ENCODE measurements at regions of chr15 and their contacts with region 1.

Region 1: GRCh38 chr15:39756806-39757522 is 25.7 kb downstream of the FSIP1 start:
- DNase-seq: peak in 5 of 14 experiments; percentile 3 to 75 (median 65)
- ATAC-seq: no peak
- H3K4me3 ChIP-seq: no peak overlapping the region
- H3K4me3 Mint-ChIP-seq: no peak overlapping the region
- H3K27ac ChIP-seq: no peak overlapping the region
- H3K27ac Mint-ChIP-seq: no peak overlapping the region
- H3K4me1 ChIP-seq: no peaks in the 10 kb centered on the region
- H3K4me1 Mint-ChIP-seq: no peaks in the 10 kb centered on the region
- H3K27me3 ChIP-seq: no peaks in the 10 kb centered on the region
- H3K27me3 Mint-ChIP-seq: peaks cover 7% of the 10 kb centered on the region
- CTCF ChIP-seq: peak; percentile 97

Region 2: DNA sequence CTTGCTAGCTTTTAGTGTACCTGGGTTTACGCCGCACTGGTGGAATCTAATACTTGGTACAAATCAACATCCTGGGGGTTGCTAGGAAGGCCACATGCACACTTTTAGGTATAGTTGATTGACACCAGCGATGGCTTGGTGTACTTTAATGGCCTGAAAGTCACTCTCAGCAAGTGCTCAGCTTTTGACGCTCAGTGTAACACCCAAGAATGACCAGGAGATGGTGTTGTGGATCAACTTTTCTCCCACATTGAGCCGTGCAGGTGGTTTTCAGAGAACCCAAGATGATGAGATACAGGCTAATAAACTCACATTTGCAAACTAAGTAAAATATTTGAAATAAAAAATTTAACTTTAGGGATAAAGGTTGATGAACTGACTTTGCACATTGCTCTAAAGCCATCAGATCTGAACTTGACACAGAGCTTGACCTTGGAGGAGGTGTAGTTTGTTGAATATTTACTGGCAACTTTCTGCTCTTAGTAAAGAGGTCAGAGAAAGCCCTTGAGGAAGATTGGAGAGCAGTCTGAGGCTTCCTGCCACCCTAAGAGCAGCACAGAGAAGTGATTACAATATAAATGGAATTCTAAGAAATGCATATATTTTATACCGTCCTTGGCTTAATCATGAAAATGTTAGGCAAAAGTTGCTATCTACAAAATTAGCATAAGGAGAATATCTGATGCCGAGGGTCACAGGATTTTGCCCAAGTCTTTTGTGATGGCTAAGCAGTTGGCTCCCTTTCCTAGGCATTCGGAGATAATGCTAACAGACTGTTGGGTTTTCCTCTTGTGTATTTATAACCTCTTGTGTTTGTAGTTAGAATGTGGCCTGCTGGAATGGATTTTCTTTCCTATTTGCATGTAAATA is 1048.9 kb before region 1 on chr15:
- CTCF ChIA-PET with region 1: interaction called, 9 read pairs
- POLR2A ChIA-PET with region 1: interaction called, 3 read pairs
- intact Hi-C with region 1: loop called (anchors 2 to 5 kb)
- DNase-seq: peak in 6 of 14 experiments; percentile 9 to 76 (median 54)
- ATAC-seq: peak; percentile 98
- H3K4me3 ChIP-seq: no peak overlapping the region
- H3K4me3 Mint-ChIP-seq: no peak overlapping the region
- H3K27ac ChIP-seq: no peak overlapping the region
- H3K27ac Mint-ChIP-seq: no peak overlapping the region
- H3K4me1 ChIP-seq: no peaks in the 10 kb centered on the region
- H3K4me1 Mint-ChIP-seq: no peaks in the 10 kb centered on the region
- H3K27me3 ChIP-seq: no peaks in the 10 kb centered on the region
- H3K27me3 Mint-ChIP-seq: no peaks in the 10 kb centered on the region
- CTCF ChIP-seq: peak; percentile 71

Region 3: GRCh38 chr15:39125904-39126303 is 631.1 kb before region 1 on chr15:
- CTCF ChIA-PET with region 1: no interaction called
- POLR2A ChIA-PET with region 1: no interaction called
- intact Hi-C with region 1: loop called (anchors 2 to 5 kb)
- DNase-seq: peak in 6 of 14 experiments; percentile 1 to 51 (median 22)
- ATAC-seq: no peak
- H3K4me3 ChIP-seq: no peak overlapping the region
- H3K4me3 Mint-ChIP-seq: no peak overlapping the region
- H3K27ac ChIP-seq: no peak overlapping the region
- H3K27ac Mint-ChIP-seq: no peak overlapping the region
- H3K4me1 ChIP-seq: no peaks in the 10 kb centered on the region
- H3K4me1 Mint-ChIP-seq: no peaks in the 10 kb centered on the region
- H3K27me3 ChIP-seq: no peaks in the 10 kb centered on the region
- H3K27me3 Mint-ChIP-seq: peaks cover 13% of the 10 kb centered on the region
- CTCF ChIP-seq: peak; percentile 35

Region 4: GRCh38 chr15:39594056-39594763 is 162.8 kb before region 1 on chr15:
- CTCF ChIA-PET with region 1: interaction called, 18 read pairs
- POLR2A ChIA-PET with region 1: no interaction called
- intact Hi-C with region 1: loop called in 1 of 2 experiments (anchors 5 kb)
- DNase-seq: peak in 6 of 14 experiments; percentile 10 to 72 (median 56)
- ATAC-seq: no peak
- H3K4me3 ChIP-seq: no peak overlapping the region
- H3K4me3 Mint-ChIP-seq: no peak overlapping the region
- H3K27ac ChIP-seq: no peak overlapping the region
- H3K27ac Mint-ChIP-seq: no peak overlapping the region
- H3K4me1 ChIP-seq: no peaks in the 10 kb centered on the region
- H3K4me1 Mint-ChIP-seq: no peaks in the 10 kb centered on the region
- H3K27me3 ChIP-seq: no peaks in the 10 kb centered on the region
- H3K27me3 Mint-ChIP-seq: peaks cover 4% of the 10 kb centered on the region
- CTCF ChIP-seq: peak; percentile 38

Region 5: GRCh38 chr15:39770748-39771689 is 14.1 kb after region 1 on chr15:
- CTCF ChIA-PET with region 1: interaction called, 8 read pairs
- POLR2A ChIA-PET with region 1: interaction called, 10 read pairs
- intact Hi-C with region 1: no loop called
- DNase-seq: no peak
- ATAC-seq: no peak
- H3K4me3 ChIP-seq: no peak overlapping the region
- H3K4me3 Mint-ChIP-seq: no peak overlapping the region
- H3K27ac ChIP-seq: no peak overlapping the region
- H3K27ac Mint-ChIP-seq: no peak overlapping the region
- H3K4me1 ChIP-seq: peaks cover 9% of the 10 kb centered on the region
- H3K4me1 Mint-ChIP-seq: peaks cover 22% of the 10 kb centered on the region
- H3K27me3 ChIP-seq: no peaks in the 10 kb centered on the region
- H3K27me3 Mint-ChIP-seq: no peaks in the 10 kb centered on the region
- CTCF ChIP-seq: no peak

Measured in CD4-positive, alpha-beta T cell (primary cell).